ENCODE measurements at regions of chr9 and their contacts with region 1.

Region 1: GRCh38 chr9:36612946-36613345 is 40.3 kb downstream of the MELK start:
- DNase-seq: no peak
- H3K27ac ChIP-seq: no peak overlapping the region
- CTCF ChIP-seq: no peak

Region 2: GRCh38 chr9:36575411-36575882 is 37.5 kb before region 1 on chr9:
- CTCF ChIA-PET with region 1: no interaction called
- POLR2A ChIA-PET with region 1: interaction called, 10 read pairs
- DNase-seq: peak; percentile 30
- H3K27ac ChIP-seq: no peak overlapping the region
- CTCF ChIP-seq: no peak